ENCODE measurements at regions of chr4 and their contacts with region 1.

Region 1: GRCh38 chr4:154551872-154552686 is 1.9 kb upstream of the PLRG1 start:
- DNase-seq: peak; percentile 80

Region 2: DNA sequence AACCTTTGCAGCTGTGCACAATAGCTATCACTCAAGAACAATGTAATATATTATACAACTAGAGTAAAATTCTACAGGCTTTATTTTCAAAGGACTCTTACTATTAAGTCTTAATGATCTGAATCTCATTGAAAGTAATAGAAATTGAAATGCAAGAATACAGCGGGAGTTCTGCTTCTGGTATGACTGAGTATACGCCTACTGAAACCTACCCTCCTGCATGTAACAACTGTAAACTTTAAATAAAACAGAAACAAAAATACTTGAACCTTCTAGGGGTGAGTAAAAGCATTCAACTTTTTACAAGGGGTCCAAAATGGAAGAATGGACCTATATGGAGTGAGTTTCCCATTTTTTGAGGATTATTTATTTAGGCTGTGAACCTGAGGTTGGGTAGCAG is 74.0 kb before region 1 on chr4:
- intact Hi-C with region 1: no loop called
- DNase-seq: no peak

Region 3: DNA sequence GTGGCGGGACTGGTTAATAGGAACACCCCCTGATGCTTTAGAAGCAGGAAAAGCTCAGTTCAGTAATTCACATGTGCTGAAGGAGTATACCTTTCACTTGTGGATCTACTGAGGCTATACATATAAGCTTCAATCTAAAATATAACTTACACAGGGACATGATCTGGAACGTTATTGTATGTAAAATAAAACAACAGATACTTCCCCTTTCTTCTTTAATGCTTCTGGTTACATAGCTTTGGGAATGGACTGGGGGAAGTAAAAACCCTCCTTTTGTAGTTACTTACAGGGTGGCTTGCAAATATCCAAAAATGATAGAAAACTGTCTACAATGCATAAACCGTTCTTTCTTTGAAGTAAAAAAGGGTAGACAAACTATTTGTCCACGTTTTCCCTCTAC is 58.5 kb after region 1 on chr4:
- intact Hi-C with region 1: no loop called
- DNase-seq: no peak

Region 4: DNA sequence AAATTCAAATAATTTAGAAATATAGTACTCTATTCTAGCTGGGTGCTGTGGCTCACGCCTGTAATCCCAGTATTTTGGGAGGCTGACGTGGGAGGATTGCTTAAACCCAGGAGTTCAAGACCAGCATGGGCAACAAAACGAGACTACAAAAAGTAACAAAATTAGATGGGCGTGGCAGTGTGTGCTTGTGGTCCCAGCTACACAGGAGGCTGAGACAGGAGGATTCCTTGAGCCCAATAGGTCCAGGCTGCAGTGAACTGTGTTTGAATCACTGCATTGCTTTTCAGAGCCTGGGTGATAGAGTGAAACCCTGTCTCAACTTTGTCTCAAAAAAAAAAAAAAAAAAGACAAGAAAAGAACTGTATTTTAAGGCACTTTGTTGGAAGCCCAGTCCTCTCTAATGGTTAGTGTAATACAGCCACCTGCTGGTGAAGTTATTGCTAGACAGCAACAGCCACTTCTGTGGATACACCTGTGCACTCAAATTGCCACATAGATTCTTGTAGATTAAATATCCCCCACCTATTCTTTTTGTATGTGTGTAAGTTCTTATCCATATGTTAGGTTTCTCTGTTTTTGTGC is 70.4 kb after region 1 on chr4:
- intact Hi-C with region 1: loop called (anchors 2 kb)
- DNase-seq: no peak

Region 5: GRCh38 chr4:154707877-154708276 is 155.8 kb after region 1 on chr4:
- intact Hi-C with region 1: no loop called
- DNase-seq: no peak

Region 6: DNA sequence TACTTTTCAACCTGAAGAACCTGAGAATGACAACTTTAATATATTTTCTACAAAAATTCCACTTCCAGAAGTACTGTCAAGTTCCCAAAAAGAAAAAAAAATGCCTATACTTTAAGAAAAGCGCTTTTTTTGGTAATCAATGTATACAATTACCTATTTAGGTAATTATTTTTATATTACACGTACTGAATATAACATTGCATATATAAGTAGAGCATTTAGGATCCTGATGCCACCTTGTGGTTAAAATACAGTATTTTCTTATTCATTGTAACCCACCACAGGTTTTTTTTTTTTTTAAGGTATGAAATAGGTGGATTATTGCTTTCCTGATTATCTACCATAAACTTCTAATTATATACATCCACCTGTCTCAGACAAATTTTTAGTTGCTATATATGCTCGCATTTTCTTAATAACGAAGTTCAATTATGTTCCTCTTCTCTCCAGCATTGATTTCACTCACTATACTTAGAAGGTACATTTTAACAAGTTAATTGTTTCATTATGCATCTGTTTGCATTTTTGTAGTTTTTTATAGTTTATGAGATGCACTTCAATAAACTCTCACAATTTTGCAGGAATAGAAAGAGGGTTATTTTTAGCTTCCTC is 819.5 kb after region 1 on chr4:
- intact Hi-C with region 1: loop called (anchors 5 kb)
- DNase-seq: no peak

Region 7: GRCh38 chr4:155712846-155713245 is 1160.8 kb after region 1 on chr4:
- intact Hi-C with region 1: loop called (anchors 10 kb)
- DNase-seq: no peak

Measured in cardiac septum (tissue), 1 donor.